Activated CD4-positive, alpha-beta memory T cell treated with anti-CD3 and anti-CD28 coated beads for 36 hours (primary cell): ENCODE measurements at regions of chr4 and their contacts with region 1.

Region 1: GRCh38 chr4:6250235-6250983 is 19.2 kb upstream of the WFS1 start:
- DNase-seq: no peak
- H3K4me3 Mint-ChIP-seq: no peak overlapping the region
- H3K27ac Mint-ChIP-seq: no peak overlapping the region
- H3K4me1 Mint-ChIP-seq: no peaks in the 10 kb centered on the region
- H3K27me3 Mint-ChIP-seq: peaks cover 24% of the 10 kb centered on the region

Region 2: GRCh38 chr4:5998333-5998936 is 252.0 kb before region 1 on chr4:
- CTCF ChIA-PET with region 1: interaction called, 40 read pairs
- POLR2A ChIA-PET with region 1: no interaction called
- intact Hi-C with region 1: loop called (anchors 5 kb)
- DNase-seq: peak; percentile 63
- H3K4me3 Mint-ChIP-seq: no peak overlapping the region
- H3K27ac Mint-ChIP-seq: no peak overlapping the region
- H3K4me1 Mint-ChIP-seq: peaks cover 4% of the 10 kb centered on the region
- H3K27me3 Mint-ChIP-seq: peaks cover 3% of the 10 kb centered on the region

Region 3: GRCh38 chr4:6206771-6207290 is 43.6 kb before region 1 on chr4:
- CTCF ChIA-PET with region 1: interaction called, 12 read pairs
- POLR2A ChIA-PET with region 1: no interaction called
- intact Hi-C with region 1: no loop called
- DNase-seq: no peak
- H3K4me3 Mint-ChIP-seq: no peak overlapping the region
- H3K27ac Mint-ChIP-seq: no peak overlapping the region
- H3K4me1 Mint-ChIP-seq: no peaks in the 10 kb centered on the region
- H3K27me3 Mint-ChIP-seq: peaks cover 5% of the 10 kb centered on the region

Region 4: DNA sequence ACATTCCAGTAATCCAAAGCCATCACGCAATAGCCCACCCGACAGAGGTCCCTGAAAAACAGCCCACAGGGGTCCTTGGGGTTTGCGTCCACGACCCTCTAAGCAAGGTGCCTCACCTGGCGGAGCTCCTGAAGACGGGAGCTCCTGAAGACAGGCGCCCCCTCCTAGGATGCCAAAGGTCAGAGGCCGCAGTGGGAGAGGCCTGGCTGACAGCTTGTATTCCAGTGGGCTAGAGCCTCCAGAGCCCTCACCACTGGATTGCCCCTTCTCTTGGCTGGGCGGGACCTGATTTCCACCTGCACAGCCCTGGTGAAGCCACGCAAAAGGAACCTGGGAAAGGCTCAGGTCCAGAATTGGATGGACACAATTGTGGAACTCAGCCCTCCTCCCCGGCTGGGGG is 10.4 kb before region 1 on chr4:
- CTCF ChIA-PET with region 1: interaction called, 27 read pairs
- POLR2A ChIA-PET with region 1: no interaction called
- intact Hi-C with region 1: no loop called
- DNase-seq: no peak
- H3K4me3 Mint-ChIP-seq: no peak overlapping the region
- H3K27ac Mint-ChIP-seq: no peak overlapping the region
- H3K4me1 Mint-ChIP-seq: no peaks in the 10 kb centered on the region
- H3K27me3 Mint-ChIP-seq: peaks cover 31% of the 10 kb centered on the region

Region 5: GRCh38 chr4:6269616-6270511 is 19.5 kb after region 1 on chr4 and contains the start of gene WFS1:
- CTCF ChIA-PET with region 1: interaction called, 64 read pairs
- POLR2A ChIA-PET with region 1: no interaction called
- intact Hi-C with region 1: no loop called
- DNase-seq: peak; percentile 99
- H3K4me3 Mint-ChIP-seq: peak within 1 kb of the TSS; percentile 73
- H3K27ac Mint-ChIP-seq: no peak within 1 kb of the TSS
- H3K4me1 Mint-ChIP-seq: peaks cover 8% of the 10 kb centered on the region
- H3K27me3 Mint-ChIP-seq: peaks cover 3% of the 10 kb centered on the region
- total RNA-seq, gene WFS1: 4.6 to 5.3 TPM

Region 6: GRCh38 chr4:6355052-6355451 is 104.6 kb after region 1 on chr4:
- CTCF ChIA-PET with region 1: no interaction called
- POLR2A ChIA-PET with region 1: no interaction called
- intact Hi-C with region 1: no loop called
- DNase-seq: no peak
- H3K4me3 Mint-ChIP-seq: no peak overlapping the region
- H3K27ac Mint-ChIP-seq: no peak overlapping the region
- H3K4me1 Mint-ChIP-seq: no peaks in the 10 kb centered on the region
- H3K27me3 Mint-ChIP-seq: peaks cover 13% of the 10 kb centered on the region

Region 7: DNA sequence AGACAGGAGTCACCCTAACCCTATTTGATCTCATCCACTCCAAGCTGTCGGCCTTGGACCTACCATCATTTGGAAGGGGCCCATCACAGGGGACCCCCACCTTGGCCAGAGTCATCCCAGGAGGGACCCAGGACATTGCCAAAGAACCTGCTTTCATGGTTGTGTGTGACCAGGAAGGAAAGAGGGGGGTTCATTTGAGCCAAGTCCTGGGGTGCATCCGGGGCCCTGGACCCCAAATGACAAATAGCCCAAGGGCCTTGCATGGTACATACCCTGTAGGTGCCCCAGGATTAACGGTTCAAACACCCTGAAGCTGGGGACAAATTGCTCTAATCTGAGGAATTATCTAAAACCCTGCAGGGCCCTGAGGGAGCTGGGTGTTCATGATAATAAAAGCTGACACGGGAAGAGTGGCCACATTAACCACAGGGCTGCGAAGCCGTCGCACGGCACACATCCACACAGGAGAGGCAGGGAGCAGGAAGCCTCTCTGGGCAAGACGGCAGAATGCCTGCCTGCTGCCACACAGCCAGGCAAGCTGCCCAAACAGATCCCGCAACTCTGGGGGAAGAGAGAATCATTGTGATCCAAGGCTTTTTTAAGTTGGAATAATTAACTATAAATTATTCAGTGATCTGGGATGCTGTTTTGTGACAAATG is 250.2 kb after region 1 on chr4:
- CTCF ChIA-PET with region 1: no interaction called
- POLR2A ChIA-PET with region 1: no interaction called
- intact Hi-C with region 1: no loop called
- DNase-seq: no peak
- H3K4me3 Mint-ChIP-seq: no peak overlapping the region
- H3K27ac Mint-ChIP-seq: no peak overlapping the region
- H3K4me1 Mint-ChIP-seq: no peaks in the 10 kb centered on the region
- H3K27me3 Mint-ChIP-seq: peaks cover 25% of the 10 kb centered on the region

Region 8: GRCh38 chr4:7266525-7267292 is 1016.3 kb after region 1 on chr4:
- CTCF ChIA-PET with region 1: no interaction called
- POLR2A ChIA-PET with region 1: no interaction called
- intact Hi-C with region 1: no loop called
- DNase-seq: no peak
- H3K4me3 Mint-ChIP-seq: no peak overlapping the region
- H3K27ac Mint-ChIP-seq: no peak overlapping the region
- H3K4me1 Mint-ChIP-seq: no peaks in the 10 kb centered on the region
- H3K27me3 Mint-ChIP-seq: no peaks in the 10 kb centered on the region